ENCODE measurements at regions of chr2 and their contacts with region 1.

Region 1: GRCh38 chr2:238362626-238363025 is 42.3 kb downstream of the TRAF3IP1 start:
- DNase-seq: no peak
- ATAC-seq: no peak
- H3K4me3 ChIP-seq: no peak overlapping the region
- H3K4me3 Mint-ChIP-seq: no peak overlapping the region
- H3K27ac ChIP-seq: no peak overlapping the region
- H3K27ac Mint-ChIP-seq: no peak overlapping the region
- H3K4me1 ChIP-seq: no peaks in the 10 kb centered on the region
- H3K4me1 Mint-ChIP-seq: peaks cover 4% of the 10 kb centered on the region
- H3K27me3 ChIP-seq: no peaks in the 10 kb centered on the region
- H3K27me3 Mint-ChIP-seq: no peaks in the 10 kb centered on the region
- CTCF ChIP-seq: no peak

Region 2: GRCh38 chr2:237874585-237875161 is 488.0 kb before region 1 on chr2:
- CTCF ChIA-PET with region 1: no interaction called
- POLR2A ChIA-PET with region 1: no interaction called
- intact Hi-C with region 1: no loop called
- DNase-seq: no peak
- ATAC-seq: no peak
- H3K4me3 ChIP-seq: no peak overlapping the region
- H3K4me3 Mint-ChIP-seq: no peak overlapping the region
- H3K27ac ChIP-seq: no peak overlapping the region
- H3K27ac Mint-ChIP-seq: no peak overlapping the region
- H3K4me1 ChIP-seq: no peaks in the 10 kb centered on the region
- H3K4me1 Mint-ChIP-seq: no peaks in the 10 kb centered on the region
- H3K27me3 ChIP-seq: peaks cover 0 to 12% (median under 1%) of the 10 kb centered on the region in 4 experiments
- H3K27me3 Mint-ChIP-seq: peaks cover 14% of the 10 kb centered on the region
- CTCF ChIP-seq: no peak

Region 3: DNA sequence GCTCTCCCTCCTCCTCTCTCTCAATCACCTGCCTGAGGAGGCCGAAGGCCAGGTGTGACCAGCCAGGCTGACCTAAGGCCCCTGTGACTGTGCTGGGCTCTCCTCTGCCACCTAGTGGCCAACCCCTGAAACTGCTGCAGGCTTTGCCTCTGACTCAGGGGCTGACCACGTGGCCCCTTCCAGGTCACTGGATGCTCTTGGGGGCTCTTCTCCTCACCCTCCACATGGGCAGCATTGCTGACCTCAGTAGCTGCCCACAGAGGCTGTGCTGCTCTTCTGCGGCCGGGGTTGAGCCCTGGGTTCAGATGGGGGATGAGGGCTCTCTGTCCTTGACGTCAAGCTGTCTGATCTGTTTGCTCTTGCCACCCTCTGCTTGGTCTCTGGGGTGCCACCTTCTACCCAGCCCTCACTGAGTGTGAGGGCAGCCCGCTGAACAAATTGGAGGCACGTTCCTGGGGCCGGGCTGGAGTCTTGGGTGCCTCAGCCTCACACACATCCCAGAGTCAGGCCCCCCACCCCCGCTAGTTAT is 608.0 kb after region 1 on chr2:
- CTCF ChIA-PET with region 1: no interaction called
- POLR2A ChIA-PET with region 1: no interaction called
- intact Hi-C with region 1: loop called (anchors 5 kb)
- DNase-seq: peak; percentile 56
- ATAC-seq: peak; percentile 43
- H3K4me3 ChIP-seq: no peak overlapping the region
- H3K4me3 Mint-ChIP-seq: no peak overlapping the region
- H3K27ac ChIP-seq: no peak overlapping the region
- H3K27ac Mint-ChIP-seq: no peak overlapping the region
- H3K4me1 ChIP-seq: no peaks in the 10 kb centered on the region
- H3K4me1 Mint-ChIP-seq: no peaks in the 10 kb centered on the region
- H3K27me3 ChIP-seq: peaks cover 0 to 21% (median 1%) of the 10 kb centered on the region in 4 experiments
- H3K27me3 Mint-ChIP-seq: peaks cover 9% of the 10 kb centered on the region
- CTCF ChIP-seq: peak; percentile 95